AG04449 (cell line): ENCODE measurements at regions of chr14 and their contacts with region 1.

Region 1: GRCh38 chr14:105045710-105046326 is 19.4 kb downstream of the GPR132 start:
- DNase-seq: no peak
- H3K4me3 ChIP-seq: peak overlapping the region; percentile 10
- CTCF ChIP-seq: peak; percentile 99

Region 2: GRCh38 chr14:104085030-104085888 is 960.6 kb before region 1 on chr14 and contains the start of gene ASPG:
- CTCF ChIA-PET with region 1: no interaction called
- POLR2A ChIA-PET with region 1: no interaction called
- DNase-seq: no peak
- H3K4me3 ChIP-seq: no peak within 1 kb of the TSS
- CTCF ChIP-seq: no peak

Region 3: DNA sequence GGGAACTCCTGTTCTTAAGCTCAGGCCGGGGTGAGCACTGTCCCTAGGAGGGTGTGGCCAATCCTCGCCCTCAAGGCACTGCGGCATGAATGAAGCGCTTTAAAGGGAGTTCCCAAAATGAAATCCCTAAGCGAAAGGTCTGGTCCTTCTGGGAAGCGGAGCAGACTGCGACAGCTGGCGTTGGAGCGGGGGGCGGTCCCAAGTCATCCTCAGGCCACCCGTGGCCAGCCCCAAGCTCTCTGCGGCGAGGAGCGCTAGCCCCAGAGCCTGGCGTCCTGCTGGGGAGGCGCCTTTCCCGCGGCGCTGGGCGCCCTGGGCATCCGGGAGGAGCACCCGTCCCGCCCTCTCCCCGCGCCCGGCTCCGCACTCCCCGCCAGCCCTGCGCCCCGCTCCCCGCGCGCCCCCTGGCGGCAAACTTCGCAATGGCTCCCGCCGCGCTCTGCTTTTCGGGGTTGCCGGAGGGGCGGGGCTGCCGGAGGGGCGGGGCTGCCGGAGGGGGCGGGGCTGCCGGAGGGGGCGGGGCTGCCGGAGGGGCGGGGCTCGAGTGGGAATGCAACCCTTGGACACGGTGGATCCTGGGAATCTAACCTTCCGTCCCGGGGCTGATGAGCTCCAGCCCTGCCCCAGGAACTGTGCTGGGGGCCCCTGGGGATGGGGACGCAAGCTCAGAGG is 219.5 kb before region 1 on chr14:
- CTCF ChIA-PET with region 1: interaction called, 10 read pairs
- POLR2A ChIA-PET with region 1: no interaction called
- DNase-seq: no peak
- H3K4me3 ChIP-seq: peak overlapping the region; percentile 76
- CTCF ChIP-seq: peak; percentile 78

Region 4: DNA sequence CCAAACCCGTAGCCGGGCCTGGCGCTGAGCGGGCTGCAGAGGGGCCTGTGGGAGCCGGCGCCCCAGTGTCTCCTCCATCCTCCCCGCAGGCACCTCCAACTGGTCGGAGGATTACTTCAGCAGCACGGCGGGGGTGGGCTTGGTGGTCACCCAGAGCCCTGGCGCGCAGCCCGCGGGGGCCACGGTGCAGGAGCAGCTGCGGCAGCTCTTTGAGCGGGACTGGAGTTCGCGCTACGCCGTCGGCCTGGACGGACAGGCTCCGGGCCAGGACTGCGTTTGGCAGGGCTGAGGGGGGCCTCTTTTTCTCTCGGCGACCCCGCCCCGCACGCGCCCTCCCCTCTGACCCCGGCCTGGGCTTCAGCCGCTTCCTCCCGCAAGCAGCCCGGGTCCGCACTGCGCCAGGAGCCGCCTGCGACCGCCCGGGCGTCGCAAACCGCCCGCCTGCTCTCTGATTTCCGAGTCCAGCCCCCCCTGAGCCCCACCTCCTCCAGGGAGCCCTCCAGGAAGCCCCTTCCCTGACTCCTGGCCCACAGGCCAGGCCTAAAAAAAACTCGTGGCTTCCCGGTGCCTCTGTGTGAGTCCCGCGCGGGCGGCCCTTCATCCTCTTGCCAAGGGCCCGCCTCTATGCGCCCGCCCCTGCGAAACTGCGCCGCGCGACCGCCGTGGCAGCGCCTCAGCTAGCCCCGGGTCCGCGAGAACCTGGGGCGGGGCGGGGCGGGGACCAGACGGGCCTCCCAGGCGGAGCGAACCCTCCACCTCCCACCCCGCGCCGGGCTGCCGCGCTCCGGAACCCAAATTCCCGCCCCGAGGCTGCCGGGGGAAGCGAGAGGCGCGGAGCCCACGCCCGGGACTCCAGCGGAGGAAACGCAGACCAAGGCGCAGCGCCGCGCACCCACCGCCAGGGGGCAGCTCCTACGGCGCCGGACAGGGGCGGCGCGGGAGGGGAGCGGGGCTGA is 112.9 kb before region 1 on chr14:
- CTCF ChIA-PET with region 1: interaction called, 25 read pairs
- POLR2A ChIA-PET with region 1: no interaction called
- DNase-seq: peak; percentile 10
- H3K4me3 ChIP-seq: peak overlapping the region; percentile 50
- CTCF ChIP-seq: peak; percentile 92

Region 5: GRCh38 chr14:104965561-104966231 is 80.1 kb before region 1 on chr14:
- CTCF ChIA-PET with region 1: interaction called, 383 read pairs
- POLR2A ChIA-PET with region 1: no interaction called
- DNase-seq: no peak
- H3K4me3 ChIP-seq: no peak overlapping the region
- CTCF ChIP-seq: no peak

Region 6: GRCh38 chr14:104998801-104999200 is 47.0 kb before region 1 on chr14:
- CTCF ChIA-PET with region 1: interaction called, 15 read pairs
- POLR2A ChIA-PET with region 1: no interaction called
- DNase-seq: no peak
- H3K4me3 ChIP-seq: no peak overlapping the region
- CTCF ChIP-seq: no peak

Region 7: DNA sequence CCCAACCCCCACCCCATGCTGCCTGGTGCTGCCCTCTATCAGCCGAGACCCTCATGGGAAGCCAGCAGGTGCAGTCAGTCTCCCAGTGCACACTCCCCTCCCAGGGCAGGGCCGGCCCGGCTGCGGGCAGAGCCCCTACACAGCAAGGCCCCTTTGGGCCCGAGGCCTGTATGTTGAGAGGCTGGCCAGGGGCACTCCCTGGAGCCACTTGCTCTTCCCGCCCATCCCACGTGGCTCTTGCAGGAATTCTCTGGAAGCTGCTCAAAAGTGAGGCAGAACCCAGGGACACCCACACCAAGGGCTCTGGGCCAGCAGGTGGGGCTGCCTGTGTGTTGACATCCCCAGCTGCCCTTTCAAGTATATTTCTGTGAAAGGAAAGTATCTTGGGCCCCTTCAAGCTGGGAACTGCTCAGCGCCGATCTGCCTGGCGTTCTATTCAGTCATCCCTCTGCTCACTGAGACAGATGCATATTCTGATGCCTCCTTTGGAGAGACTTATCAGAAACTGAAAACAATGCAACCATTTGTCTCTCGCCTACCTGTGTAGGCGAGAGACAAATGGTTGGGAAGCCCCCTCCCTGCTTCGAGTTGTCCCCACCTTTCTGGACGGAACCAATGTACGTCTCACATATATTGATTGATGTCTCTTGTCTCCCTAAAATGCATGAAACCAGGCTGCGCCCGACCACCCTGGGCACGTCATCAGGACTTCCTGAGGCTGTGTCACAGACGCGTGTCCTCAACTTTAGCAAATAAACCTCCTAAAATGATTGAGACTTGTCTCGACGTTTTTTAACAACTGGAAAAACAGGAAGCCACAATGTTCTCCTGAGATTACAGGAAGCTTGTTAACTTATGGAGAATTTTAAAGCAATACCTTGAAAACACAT is 13.5 kb after region 1 on chr14:
- CTCF ChIA-PET with region 1: interaction called, 80 read pairs
- POLR2A ChIA-PET with region 1: no interaction called
- DNase-seq: no peak
- H3K4me3 ChIP-seq: no peak overlapping the region
- CTCF ChIP-seq: no peak